Activated B cell treated with CpG ODN at 0.5 μM for 24 hours (primary cell): ENCODE measurements at regions of chr2 and their contacts with region 1.

Region 1: GRCh38 chr2:70301344-70302194 is at the start of gene FAM136A:
- DNase-seq: peak; percentile 90
- ATAC-seq: peak; percentile 92
- H3K4me3 Mint-ChIP-seq: peak within 1 kb of the TSS; percentile 90
- H3K27ac Mint-ChIP-seq: peak within 1 kb of the TSS; percentile 95
- H3K4me1 Mint-ChIP-seq: peaks cover 22% of the 10 kb centered on the region
- H3K27me3 Mint-ChIP-seq: no peaks in the 10 kb centered on the region
- CTCF ChIP-seq: no peak
- total RNA-seq, gene FAM136A: 38.9 and 41.0 TPM in 2 replicates

Region 2: DNA sequence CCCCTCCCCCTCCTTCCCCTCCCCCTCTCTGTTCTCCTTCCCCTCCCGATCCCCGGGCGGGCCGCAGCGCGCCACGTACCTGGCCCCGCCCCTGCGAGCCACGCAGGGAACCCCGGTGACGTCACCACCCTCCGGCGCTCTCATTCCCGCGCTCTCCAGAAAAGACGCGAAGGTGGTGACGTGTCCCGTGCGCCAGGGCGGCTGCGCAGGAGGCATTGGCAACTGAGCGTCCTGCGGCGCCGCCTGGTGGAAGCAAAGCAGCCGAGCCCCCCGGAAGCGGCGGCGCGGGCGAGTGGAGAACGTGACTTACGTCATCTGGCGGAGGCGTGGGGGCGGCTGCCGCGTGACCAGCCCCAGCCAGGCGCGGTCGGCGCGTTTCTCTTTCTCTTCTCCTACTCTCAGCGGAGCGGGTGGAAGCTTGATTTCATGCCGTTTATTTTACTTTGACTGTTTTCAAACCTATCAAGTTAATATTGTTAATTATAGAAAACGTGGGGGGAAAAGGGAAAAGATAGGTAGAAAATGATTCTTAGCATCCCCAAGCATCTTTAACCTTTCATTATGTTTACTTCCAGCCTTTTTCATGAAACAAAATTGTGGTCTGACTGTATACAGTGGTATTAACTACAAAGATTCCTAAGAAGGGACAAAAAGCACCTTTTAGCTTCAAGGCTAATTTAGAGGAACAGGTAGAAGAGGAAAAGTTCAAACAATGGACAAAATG is 158.8 kb before region 1 on chr2:
- CTCF ChIA-PET with region 1: no interaction called
- POLR2A ChIA-PET with region 1: interaction called, 12 read pairs
- intact Hi-C with region 1: loop called (anchors 1 kb)
- DNase-seq: peak; percentile 100
- ATAC-seq: peak; percentile 70
- H3K4me3 Mint-ChIP-seq: peak overlapping the region; percentile 86
- H3K27ac Mint-ChIP-seq: peak overlapping the region; percentile 100
- H3K4me1 Mint-ChIP-seq: peaks cover 37% of the 10 kb centered on the region
- H3K27me3 Mint-ChIP-seq: no peaks in the 10 kb centered on the region
- CTCF ChIP-seq: no peak

Region 3: GRCh38 chr2:70258532-70258874 is 43.1 kb before region 1 on chr2:
- CTCF ChIA-PET with region 1: interaction called, 9 read pairs
- POLR2A ChIA-PET with region 1: interaction called, 3 read pairs
- intact Hi-C with region 1: loop called (anchors 2 kb)
- DNase-seq: no peak
- ATAC-seq: no peak
- H3K4me3 Mint-ChIP-seq: peak overlapping the region; percentile 93
- H3K27ac Mint-ChIP-seq: peak overlapping the region; percentile 12
- H3K4me1 Mint-ChIP-seq: peaks cover 13% of the 10 kb centered on the region
- H3K27me3 Mint-ChIP-seq: no peaks in the 10 kb centered on the region
- CTCF ChIP-seq: no peak

Region 4: GRCh38 chr2:70283500-70284191 is 17.9 kb before region 1 on chr2:
- CTCF ChIA-PET with region 1: no interaction called
- POLR2A ChIA-PET with region 1: no interaction called
- intact Hi-C with region 1: no loop called
- DNase-seq: no peak
- ATAC-seq: no peak
- H3K4me3 Mint-ChIP-seq: no peak overlapping the region
- H3K27ac Mint-ChIP-seq: no peak overlapping the region
- H3K4me1 Mint-ChIP-seq: peaks cover 7% of the 10 kb centered on the region
- H3K27me3 Mint-ChIP-seq: no peaks in the 10 kb centered on the region
- CTCF ChIP-seq: no peak

Region 5: DNA sequence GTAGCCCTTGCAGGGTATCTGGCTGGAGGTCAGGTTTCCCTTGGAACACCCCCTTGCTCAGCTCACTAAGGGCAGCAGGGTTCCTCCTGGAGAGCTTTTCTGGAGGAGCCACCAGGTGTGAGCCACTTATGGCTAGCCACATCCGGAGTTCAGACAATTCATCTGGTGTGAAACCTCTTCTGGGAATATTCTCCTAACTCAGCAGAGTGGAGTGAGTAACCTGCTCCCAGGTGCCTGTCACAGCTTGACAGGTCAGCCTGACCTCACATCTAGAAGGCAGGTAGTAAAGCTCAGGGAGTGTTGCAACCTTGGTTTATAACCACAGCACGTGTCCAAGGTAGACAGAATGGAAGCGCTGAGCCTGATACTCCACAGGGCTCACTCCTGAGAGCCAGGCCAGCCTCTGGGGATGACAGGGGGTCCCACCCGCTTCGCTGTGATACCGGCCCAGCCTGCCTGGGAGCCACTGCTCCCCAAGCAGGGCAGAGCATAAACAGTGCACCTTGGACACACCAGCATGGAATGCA is 314.7 kb after region 1 on chr2:
- CTCF ChIA-PET with region 1: interaction called, 122 read pairs
- POLR2A ChIA-PET with region 1: interaction called, 4 read pairs
- intact Hi-C with region 1: loop called (anchors 1 kb)
- DNase-seq: no peak
- ATAC-seq: no peak
- H3K4me3 Mint-ChIP-seq: no peak overlapping the region
- H3K27ac Mint-ChIP-seq: no peak overlapping the region
- H3K4me1 Mint-ChIP-seq: no peaks in the 10 kb centered on the region
- H3K27me3 Mint-ChIP-seq: peaks cover 8% of the 10 kb centered on the region
- CTCF ChIP-seq: no peak

Region 6: DNA sequence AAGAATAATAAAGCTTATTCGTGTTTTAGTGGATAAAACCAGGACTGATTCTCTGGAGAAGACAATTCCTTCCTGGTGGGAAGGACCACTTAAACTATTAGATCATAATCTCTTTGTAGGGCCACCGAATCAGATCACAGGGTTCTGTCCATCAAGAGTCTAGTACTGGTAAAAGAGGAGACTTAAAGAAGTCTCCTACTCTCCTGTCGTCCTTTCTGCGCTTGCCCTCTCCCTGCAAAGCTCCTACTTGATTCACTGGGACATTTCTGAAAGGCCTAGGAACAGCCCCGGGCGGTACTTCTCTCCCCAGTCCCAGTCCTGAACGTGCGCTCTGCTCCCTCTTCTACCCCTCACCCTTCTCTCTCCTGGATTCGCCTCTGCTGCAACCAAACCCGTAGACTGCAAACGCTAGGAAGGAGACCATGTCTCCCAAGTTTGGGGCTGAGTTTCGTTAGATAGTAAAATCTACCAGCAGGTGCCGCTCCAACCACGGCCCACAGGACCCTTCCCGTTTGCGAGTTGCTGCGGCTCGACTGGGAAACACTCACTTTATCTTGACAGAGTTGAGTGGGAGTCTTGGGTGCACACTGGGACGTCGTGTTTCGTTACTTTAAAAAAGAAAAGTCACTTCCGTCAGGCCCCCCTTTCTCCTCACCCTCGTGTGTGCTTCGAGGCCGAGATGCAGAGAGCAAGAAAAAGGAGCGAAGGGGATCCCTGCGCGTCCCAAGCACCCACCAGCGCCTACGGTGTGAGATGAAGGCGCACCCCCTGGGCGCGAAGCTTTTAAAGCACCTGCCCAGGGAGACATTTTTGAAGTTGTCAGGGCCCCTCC is 488.0 kb after region 1 on chr2:
- CTCF ChIA-PET with region 1: interaction called, 3 read pairs
- POLR2A ChIA-PET with region 1: no interaction called
- intact Hi-C with region 1: loop called (anchors 2 kb)
- DNase-seq: peak; percentile 31
- ATAC-seq: peak; percentile 67
- H3K4me3 Mint-ChIP-seq: peak overlapping the region; percentile 80
- H3K27ac Mint-ChIP-seq: no peak overlapping the region
- H3K4me1 Mint-ChIP-seq: peaks cover 6% of the 10 kb centered on the region
- H3K27me3 Mint-ChIP-seq: peaks cover 51% of the 10 kb centered on the region
- CTCF ChIP-seq: no peak

Region 7: DNA sequence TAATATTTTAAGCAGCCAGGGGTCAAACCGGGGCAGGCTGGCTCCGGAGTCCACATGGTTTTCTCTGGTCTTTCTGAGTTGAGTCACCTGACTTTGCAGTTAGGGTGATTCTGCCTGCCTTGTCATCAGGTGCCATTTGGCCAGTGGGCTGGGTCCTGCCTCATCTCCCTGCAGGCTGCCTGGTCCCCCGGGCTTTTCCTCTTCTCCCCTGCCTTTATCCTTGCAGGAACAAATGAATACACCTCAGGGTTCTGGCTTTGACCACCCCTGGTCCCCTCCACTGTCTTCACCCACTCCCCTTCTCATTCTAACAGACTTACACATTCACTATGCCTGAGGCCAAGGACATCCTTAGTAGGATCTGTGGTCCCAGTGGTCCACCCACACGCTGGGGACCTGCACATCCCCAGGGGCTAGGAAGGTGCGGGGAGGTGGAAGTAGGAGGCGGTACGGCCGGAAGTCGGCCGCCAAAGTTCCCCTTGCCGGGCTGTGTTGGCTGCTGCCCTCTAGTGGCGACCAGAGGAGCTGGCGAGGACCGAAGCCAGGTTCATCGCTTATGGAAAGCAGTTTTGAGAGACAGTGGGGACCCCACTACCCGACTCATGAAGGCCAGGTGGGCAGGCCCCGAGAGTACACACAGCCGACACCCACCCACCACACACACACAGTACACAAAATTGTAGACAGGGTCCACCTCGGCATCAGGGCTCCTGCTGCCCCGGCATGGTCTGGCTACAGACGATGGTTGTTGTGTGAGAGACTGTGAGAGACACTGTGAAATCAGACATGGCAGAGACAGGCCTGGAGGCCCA is 699.4 kb after region 1 on chr2:
- CTCF ChIA-PET with region 1: no interaction called
- POLR2A ChIA-PET with region 1: no interaction called
- intact Hi-C with region 1: loop called (anchors 5 kb)
- DNase-seq: peak; percentile 71
- ATAC-seq: peak; percentile 98
- H3K4me3 Mint-ChIP-seq: peak overlapping the region; percentile 77
- H3K27ac Mint-ChIP-seq: peak overlapping the region; percentile 53
- H3K4me1 Mint-ChIP-seq: peaks cover 10% of the 10 kb centered on the region
- H3K27me3 Mint-ChIP-seq: peaks cover 11% of the 10 kb centered on the region
- CTCF ChIP-seq: peak; percentile 51